AG04449 (cell line): ENCODE measurements at regions of chr16 and their contacts with region 1.

Region 1: GRCh38 chr16:89922884-89923690 is at the start of gene TUBB3:
- DNase-seq: no peak
- H3K4me3 ChIP-seq: peak within 1 kb of the TSS; percentile 83
- CTCF ChIP-seq: no peak

Region 2: DNA sequence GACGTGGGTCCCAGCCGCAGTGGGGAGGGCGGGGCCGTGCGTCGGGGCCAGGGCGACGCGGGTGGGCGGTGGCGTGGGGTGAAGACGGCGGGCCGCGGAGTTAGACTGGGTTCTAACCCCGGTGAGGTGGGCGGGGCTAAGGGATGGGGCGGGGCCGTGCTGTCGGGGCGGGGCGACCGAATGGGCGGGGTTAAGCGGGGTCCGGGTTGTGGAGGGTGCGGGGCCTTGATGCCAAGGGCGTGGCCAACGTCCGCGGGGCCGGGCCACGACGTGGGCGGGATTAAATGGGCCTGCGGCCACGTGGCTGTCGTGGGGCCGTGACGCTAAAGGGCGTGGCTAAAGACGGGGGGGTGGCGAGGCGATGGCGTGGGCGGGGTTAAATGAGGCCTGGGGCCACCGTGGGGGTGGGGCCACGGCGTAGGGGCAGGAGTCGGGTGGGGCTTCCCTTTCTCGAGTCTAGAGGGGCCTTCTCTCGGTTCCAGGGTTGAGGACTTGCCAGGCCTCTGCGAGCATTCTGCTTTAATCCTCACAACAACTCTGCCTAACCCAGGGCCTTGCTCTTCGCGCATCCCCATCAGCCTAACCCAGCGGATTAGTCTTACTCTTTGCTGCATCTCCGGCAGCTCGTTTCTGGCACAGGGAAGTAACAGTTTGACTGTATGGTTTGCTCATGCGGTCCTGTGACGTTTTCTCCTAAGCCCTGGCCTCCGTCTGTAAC is 49.0 kb before region 1 on chr16:
- CTCF ChIA-PET with region 1: interaction called, 4 read pairs
- POLR2A ChIA-PET with region 1: interaction called, 22 read pairs
- DNase-seq: peak; percentile 69
- H3K4me3 ChIP-seq: peak overlapping the region; percentile 90
- CTCF ChIP-seq: no peak